Sigmoid colon (tissue), 7 donors: ENCODE measurements at regions of chr14 and their contacts with region 1.

Region 1: GRCh38 chr14:35341446-35342159 is 49.4 kb downstream of the PSMA6 start:
- DNase-seq: peak; percentile 99
- H3K4me3 ChIP-seq: peak overlapping the region in 3 of 4 donors; percentile 26 to 39 (median 39)
- H3K27ac ChIP-seq: peak overlapping the region; percentile 91 to 99 (median 94)
- H3K4me1 ChIP-seq: peaks cover 0 to 66% (median 56%) of the 10 kb centered on the region in 4 donors
- H3K27me3 ChIP-seq: no peaks in the 10 kb centered on the region
- CTCF ChIP-seq: no peak
- EP300 ChIP-seq: peak in 3 of 4 donors; percentile 2 to 76 (median 19)
- POLR2A ChIP-seq: peak in 1 of 2 donors; percentile 65

Region 2: GRCh38 chr14:35121887-35122695 is 219.5 kb before region 1 on chr14 and contains the starts of genes PPP2R3C and PRORP:
- intact Hi-C with region 1: loop called (anchors 5 kb)
- DNase-seq: peak; percentile 96
- H3K4me3 ChIP-seq: peak within 1 kb of the TSS; percentile 68 to 70 (median 69)
- H3K27ac ChIP-seq: peak within 1 kb of the TSS; percentile 90 to 98 (median 94)
- H3K4me1 ChIP-seq: peaks cover 0 to 41% (median 26%) of the 10 kb centered on the region in 4 donors
- H3K27me3 ChIP-seq: no peaks in the 10 kb centered on the region
- CTCF ChIP-seq: no peak
- EP300 ChIP-seq: no peak
- POLR2A ChIP-seq: peak; percentile 45 to 70
- total RNA-seq, gene PPP2R3C: 25.3 to 44.3 (median 40.5) TPM
- total RNA-seq, gene PRORP: 7.9 to 17.1 (median 13.6) TPM

Region 3: GRCh38 chr14:35292051-35292769 is 49.4 kb before region 1 on chr14 and contains the start of gene PSMA6:
- intact Hi-C with region 1: loop called (anchors 2 kb)
- DNase-seq: peak; percentile 99
- H3K4me3 ChIP-seq: peak within 1 kb of the TSS; percentile 77 to 89 (median 80)
- H3K27ac ChIP-seq: peak within 1 kb of the TSS; percentile 89 to 96 (median 92)
- H3K4me1 ChIP-seq: peaks cover 0 to 49% (median 40%) of the 10 kb centered on the region in 4 donors
- H3K27me3 ChIP-seq: no peaks in the 10 kb centered on the region
- CTCF ChIP-seq: no peak
- EP300 ChIP-seq: peak in 1 of 4 donors; percentile 70
- POLR2A ChIP-seq: peak; percentile 81 to 86
- total RNA-seq, gene PSMA6: 104 to 203 (median 169) TPM

Region 4: GRCh38 chr14:35385042-35385839 is 43.6 kb after region 1 on chr14:
- intact Hi-C with region 1: loop called (anchors 1 kb)
- DNase-seq: peak; percentile 98
- H3K4me3 ChIP-seq: peak overlapping the region in 3 of 4 donors; percentile 10 to 33 (median 17)
- H3K27ac ChIP-seq: peak overlapping the region; percentile 91 to 97 (median 94)
- H3K4me1 ChIP-seq: peaks cover 5 to 44% (median 43%) of the 10 kb centered on the region in 4 donors
- H3K27me3 ChIP-seq: no peaks in the 10 kb centered on the region
- CTCF ChIP-seq: no peak
- EP300 ChIP-seq: peak in 2 of 4 donors; percentile 60 to 86
- POLR2A ChIP-seq: no peak